GM10248 (cell line): ENCODE measurements at regions of chr11 and their contacts with region 1.

Region 1: DNA sequence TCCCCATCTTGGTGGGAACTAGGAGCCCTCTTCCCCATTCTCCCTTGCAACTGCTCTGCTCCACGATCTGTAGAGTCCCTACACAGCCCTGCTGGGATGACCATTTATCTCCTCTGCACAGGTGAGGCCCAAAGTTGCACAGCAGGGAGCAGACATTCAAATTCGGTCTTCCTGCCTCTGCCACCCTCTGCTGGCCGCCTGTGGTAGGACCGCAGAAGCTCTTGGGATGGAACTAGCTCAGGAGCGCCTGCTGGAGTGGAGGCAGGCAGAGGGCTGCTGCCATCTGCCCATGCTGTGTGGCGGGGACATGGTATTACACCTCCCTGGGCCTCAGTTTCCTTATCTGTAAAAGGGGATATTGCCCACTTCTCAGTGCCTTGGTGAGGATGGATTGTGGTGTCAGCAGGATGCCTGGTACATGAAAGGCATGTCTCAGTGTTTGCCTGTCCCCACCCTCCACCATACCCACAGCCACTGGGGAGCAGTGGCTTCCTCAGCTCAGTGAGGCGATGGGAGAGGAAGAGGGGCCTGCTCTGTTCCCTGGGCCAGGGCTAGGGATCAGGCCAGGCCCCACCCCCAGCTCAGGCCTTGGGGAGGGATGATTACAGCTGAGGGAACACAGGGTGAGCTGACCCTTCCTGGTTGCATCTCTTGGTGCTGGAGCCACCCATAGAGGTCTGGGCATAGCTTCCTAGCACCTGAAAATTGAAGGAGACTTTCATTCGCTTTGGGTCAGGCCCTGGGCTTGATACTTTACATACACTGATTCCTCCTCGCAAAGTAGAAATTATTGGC is 11.3 kb upstream of the OMP start:
- DNase-seq: peak; percentile 91
- CTCF ChIP-seq: peak; percentile 98

Region 2: GRCh38 chr11:77047007-77047927 is 44.1 kb before region 1 on chr11:
- CTCF ChIA-PET with region 1: interaction called, 85 read pairs
- POLR2A ChIA-PET with region 1: interaction called, 3 read pairs
- DNase-seq: peak; percentile 73
- CTCF ChIP-seq: peak; percentile 66

Region 3: GRCh38 chr11:77066229-77067042 is 24.9 kb before region 1 on chr11 and contains the start of gene CAPN5:
- CTCF ChIA-PET with region 1: interaction called, 17 read pairs
- POLR2A ChIA-PET with region 1: no interaction called
- DNase-seq: peak; percentile 97
- CTCF ChIP-seq: peak; percentile 3

Region 4: DNA sequence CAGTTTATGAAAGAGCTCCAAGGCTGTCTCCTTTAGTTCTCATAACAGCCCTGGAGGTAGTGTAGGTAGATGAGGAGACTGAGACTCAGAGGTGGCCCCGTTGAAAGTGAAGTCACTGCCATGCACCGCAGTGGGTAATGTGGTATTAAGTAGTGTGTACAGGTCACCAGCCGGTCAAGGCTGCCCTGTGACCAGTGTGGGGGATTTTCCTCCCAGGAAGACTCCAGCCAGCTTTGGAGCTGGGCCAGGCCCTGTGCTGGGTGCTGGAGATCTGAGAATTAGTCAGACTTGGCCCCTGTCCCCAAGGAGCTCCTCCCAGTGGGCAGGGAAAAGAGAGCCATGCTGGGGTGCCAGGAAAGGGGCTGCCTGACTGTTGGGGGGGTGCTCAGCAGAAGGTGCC is 16.6 kb after region 1 on chr11:
- CTCF ChIA-PET with region 1: interaction called, 41 read pairs
- POLR2A ChIA-PET with region 1: no interaction called
- DNase-seq: no peak
- CTCF ChIP-seq: no peak

Region 5: DNA sequence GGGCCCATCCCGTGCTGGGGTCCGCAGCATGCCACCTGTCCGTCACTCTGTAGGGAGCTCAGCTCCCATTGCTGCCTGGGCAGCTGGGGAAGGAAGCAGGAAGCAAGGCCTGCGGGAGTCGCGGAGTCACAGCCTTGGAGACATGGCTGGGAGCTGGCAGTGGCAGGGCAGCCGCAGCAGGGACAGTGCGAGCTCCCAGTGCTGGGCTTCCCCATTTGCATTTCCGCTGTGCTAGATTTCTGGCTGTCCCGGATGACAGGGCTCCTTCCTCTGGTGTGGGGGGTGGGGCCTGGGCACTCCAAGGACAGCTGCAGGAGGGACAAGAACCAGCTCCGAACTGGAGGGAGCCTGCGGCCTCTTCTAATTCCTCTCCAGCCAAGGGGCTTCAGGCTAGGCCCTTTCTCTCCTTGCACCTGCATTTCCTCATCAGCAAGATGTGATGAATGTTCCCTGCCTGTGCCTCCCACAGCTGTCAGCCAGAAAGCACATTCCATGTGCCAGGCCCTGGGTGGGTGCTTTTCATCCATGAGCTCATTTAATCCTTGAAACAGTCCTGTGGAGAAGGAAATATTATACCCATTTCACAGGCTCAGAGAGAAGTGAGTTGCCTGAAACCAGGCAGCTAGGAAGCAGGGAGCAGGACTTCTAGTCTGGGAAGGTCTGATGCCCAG is 84.7 kb after region 1 on chr11:
- CTCF ChIA-PET with region 1: no interaction called
- POLR2A ChIA-PET with region 1: no interaction called
- DNase-seq: no peak
- CTCF ChIP-seq: no peak